ENCODE measurements at regions of chr18 and their contacts with region 1.

Region 1: GRCh38 chr18:26809346-26809745 is 56.2 kb downstream of the AQP4 start:
- DNase-seq: no peak
- H3K4me3 ChIP-seq: no peak overlapping the region
- H3K27ac ChIP-seq: no peak overlapping the region
- H3K4me1 ChIP-seq: no peaks in the 10 kb centered on the region
- H3K27me3 ChIP-seq: no peaks in the 10 kb centered on the region
- CTCF ChIP-seq: no peak
- POLR2A ChIP-seq: no peak

Region 2: DNA sequence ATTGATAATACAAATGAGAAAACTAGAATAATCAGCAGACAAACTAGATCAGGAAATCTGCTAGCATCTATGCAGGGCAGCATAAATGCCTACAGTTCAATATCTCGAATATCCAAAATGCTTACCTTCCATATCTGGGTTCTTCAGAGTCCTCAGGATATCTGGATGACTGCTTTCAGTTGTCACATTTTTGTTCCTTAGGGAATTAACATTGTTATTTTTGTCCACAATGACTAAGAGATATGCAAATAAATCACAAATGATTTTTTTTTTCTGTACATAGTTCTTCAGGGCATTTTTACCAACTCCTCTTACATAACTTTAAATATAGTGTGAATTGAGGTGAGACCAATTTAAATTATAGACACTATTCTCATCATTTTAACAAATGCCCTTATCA is 24.7 kb before region 1 on chr18:
- intact Hi-C with region 1: loop called (anchors 2 kb)
- DNase-seq: no peak
- H3K4me3 ChIP-seq: no peak overlapping the region
- H3K27ac ChIP-seq: no peak overlapping the region
- H3K4me1 ChIP-seq: no peaks in the 10 kb centered on the region
- H3K27me3 ChIP-seq: no peaks in the 10 kb centered on the region
- CTCF ChIP-seq: no peak
- POLR2A ChIP-seq: no peak

Region 3: DNA sequence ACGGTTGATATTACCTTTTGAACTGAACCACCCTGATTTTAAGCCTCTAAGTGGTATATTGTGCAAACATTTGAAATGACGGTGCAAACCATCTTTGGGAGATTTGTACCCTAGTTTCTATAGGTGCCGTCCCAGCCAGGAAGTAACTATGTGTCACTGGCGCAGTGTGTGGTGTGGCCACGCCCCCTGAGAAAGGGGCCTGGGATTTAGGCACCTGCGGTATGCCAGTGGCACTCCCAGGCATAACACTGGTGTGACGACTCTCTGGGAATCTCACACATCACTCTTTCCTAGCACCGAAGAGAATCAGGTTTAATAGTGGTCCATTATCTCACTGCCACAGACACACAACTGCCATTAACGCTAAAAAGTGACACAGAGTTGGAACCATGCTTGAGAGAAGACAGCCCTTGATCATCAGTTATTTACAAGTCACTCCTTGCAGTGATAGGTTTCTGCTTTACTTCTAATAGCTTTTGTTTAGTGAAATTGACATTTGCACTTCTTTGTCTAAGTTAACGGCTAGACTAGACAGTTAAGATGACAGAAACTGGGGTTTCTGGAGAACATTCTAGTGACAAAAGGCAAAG is 45.0 kb after region 1 on chr18:
- intact Hi-C with region 1: no loop called
- DNase-seq: no peak
- H3K4me3 ChIP-seq: no peak overlapping the region
- H3K27ac ChIP-seq: no peak overlapping the region
- H3K4me1 ChIP-seq: no peaks in the 10 kb centered on the region
- H3K27me3 ChIP-seq: no peaks in the 10 kb centered on the region
- CTCF ChIP-seq: no peak
- POLR2A ChIP-seq: no peak